ENCODE measurements at regions of chr2 and their contacts with region 1.

Region 1: DNA sequence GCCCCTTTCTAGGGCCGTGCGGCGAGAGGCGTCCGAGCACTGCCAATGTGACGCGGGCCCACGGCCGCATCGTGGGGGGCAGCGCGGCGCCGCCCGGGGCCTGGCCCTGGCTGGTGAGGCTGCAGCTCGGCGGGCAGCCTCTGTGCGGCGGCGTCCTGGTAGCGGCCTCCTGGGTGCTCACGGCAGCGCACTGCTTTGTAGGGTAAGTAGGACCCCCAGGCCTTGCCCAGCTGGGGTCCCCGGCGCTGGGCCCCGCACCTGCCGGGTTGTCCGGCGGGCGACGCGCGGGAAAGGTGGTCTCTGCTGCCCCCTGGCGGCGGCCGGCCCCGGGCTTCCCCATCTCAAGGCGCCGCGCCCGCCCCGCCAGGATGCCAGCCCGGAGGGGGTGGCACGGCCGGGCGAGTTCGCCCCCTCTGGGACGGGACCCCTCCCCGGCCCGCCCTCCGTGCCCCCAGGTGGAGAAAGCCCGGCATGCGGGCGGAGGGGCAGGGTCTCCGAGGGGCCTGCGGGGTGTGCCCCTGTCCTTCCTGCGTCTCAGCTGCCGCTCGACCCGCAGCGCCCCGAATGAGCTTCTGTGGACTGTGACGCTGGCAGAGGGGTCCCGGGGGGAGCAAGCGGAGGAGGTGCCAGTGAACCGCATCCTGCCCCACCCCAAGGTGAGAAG is 1.9 kb downstream of the PRSS56 start:
- DNase-seq: no peak

Region 2: DNA sequence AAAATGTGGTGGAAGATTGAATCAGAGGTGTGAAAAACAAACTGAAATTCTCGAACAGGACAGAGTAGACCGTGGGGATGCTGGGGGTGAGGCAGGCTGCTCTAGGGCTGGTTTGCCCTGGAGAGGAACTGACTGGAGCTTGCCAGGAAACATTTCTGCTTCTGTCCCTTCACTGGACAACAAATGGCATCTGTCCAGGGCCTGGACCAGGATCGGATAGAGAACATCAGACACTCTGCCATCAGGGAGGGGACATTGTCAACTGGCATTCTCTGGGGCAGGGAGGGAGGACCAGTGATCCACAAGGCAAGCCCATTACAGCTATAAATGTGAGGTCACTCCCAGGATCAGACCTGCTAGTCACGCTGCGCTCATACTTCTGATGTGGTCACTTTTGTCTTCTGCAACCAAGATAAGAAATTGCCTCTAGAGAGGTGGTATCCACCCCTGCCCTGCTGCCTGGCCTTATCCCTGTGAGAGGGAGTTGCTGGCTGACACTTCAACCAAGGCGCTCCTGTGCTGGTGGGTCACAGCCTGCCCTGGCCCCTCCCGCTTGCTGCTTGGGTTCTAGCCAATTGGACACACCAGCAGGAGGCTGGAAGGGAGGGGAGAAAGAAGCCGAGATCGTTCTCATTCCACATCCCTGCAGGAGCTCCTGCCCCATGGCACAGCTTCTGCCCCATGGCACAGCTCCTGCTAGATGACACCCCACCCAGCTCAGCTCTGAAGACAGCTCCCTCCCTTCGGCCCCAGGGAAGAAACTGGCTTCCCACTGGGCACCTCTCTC is 604.6 kb before region 1 on chr2:
- intact Hi-C with region 1: loop called in 1 of 2 experiments (anchors 10 kb)
- DNase-seq: peak; percentile 65

Region 3: GRCh38 chr2:232444409-232445148 is 77.5 kb before region 1 on chr2:
- intact Hi-C with region 1: loop called in 1 of 2 experiments (anchors 10 kb)
- DNase-seq: no peak

Region 4: DNA sequence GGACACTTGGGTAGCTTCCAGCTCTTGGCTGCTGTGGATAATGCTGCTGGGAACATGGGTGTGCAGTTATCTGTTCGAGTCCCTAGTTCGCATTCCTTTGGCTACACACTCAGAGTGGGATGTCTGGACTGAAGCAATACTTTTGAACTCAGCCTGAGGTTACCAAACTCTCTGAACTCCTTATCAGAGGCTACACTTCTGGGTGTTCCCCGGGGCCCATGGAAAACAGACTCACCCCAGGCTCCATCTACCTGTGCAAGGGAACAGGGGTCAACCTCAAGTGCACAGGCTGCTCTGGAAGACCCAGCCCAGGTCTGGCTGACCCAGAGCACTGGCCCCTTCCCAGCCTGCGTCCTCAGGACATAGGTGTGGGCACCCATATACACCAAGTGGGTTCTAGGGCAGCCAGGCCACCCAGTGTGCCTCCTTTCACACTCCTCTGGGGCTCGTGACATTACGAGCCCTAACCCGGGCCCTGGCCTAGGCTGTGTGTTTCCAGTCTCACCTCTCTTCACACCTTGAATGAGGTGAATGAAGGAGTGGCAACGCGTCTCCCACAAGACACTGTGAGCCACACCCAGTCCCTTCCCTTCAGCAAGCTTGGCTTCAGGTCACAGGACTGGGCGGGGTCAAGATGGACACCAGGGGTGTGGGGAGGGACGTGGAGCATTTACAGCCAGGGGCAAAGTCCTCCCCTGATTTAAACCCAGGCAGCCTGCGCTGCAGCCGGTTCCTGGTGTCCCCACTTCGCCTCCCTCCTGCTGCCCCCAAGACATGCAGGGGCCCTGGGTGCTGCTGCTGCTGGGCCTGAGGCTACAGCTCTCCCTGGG is 66.5 kb before region 1 on chr2 and contains the start of gene ALPI:
- intact Hi-C with region 1: no loop called
- DNase-seq: peak; percentile 62
- total RNA-seq, gene ALPI: not detected

Region 5: DNA sequence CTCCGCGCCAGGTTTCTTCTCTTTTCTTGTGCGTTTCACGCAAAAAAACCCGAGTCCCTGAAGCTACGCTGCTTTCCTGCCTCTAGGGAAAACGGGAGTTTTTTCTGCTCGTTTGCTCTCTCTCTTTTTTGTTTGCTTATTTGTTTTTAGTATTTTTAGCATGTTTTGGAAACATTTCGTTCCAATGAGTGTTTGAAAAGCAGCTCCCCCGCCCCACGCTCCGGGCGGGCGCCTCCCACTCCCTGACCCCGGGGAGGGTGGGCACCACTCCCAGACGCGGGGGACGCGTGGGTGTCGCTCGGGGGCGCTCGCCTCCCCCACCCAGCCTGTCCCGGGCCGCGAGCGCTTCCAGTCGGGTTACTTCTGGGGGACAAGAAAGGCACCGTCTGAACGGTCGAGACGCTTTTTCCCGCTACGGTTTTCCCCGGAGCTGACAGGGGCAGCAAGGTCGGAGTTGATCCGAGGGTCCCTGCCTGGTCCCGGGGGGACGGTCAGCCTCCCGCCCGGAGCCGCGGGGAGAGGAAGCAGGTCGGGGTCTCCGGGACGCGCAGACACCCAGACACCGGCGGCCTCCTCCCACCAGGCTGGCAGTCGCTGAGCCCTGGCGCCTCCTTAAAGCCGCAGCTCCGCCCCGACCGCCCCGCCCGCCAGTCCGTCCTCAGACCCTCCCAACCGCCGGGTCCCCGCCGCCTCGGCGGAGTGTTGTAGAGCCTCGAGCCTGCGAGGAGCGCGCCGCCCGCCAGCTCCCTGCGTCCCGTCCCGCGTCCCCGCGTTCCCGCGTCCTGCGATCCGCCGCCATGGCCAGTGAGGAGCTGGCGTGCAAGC is 111.0 kb after region 1 on chr2 and contains the start of gene EFHD1:
- intact Hi-C with region 1: no loop called
- DNase-seq: peak; percentile 93
- total RNA-seq, gene EFHD1: 42.2 to 69.7 TPM